Activated CD8-positive, alpha-beta T cell treated with anti-CD3 and anti-CD28 coated beads, Interleukin-2, amount 10 ng/mL, durations not matched to agents 7 days and 5 days (primary cell): ENCODE measurements at regions of chr2 and their contacts with region 1.

Region 1: DNA sequence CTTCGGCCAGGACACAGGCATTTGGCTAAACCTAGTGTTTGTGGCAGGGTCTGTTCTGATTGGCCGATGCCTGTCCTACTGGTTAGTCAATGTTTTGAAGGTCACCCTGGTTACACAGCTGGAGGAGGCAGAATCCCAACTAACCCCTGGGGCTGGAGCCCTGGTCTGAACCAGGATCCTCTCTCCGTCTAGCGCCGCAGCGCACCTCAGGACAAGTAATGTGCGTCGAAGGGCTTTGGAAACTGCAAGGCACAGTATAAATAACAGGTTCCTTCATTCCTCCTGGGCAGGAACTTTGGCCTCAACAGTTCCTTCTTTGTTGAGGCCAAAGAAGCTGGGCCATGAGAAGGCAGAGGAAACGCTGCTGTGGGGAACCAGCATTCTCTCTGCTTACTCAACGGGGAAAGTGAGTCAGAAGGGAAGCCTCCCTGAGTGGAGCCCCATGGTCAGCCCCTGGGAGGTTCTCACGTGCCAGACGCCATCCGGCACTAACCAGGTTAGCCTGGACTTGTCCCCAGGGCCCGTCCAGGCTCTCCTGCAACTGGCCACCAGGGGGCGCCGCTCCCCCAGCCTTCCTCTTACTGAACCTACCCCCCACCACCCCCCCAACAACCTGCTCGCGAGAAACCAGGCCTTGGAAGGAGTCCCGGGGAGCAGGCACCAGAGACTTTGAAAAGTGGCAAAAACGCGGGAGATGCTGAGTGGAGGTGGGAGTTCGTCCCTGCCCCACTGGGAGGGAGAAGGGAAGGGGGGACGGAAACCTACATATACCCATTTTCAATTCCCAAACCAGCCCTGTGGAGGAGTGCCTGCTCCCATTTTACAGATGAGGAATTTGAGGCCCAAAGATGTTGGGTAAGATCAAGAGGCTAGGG is 19.8 kb downstream of the TEX44 start:
- DNase-seq: peak; percentile 95
- ATAC-seq: peak; percentile 57
- H3K4me3 Mint-ChIP-seq: peak overlapping the region; percentile 79
- H3K27ac Mint-ChIP-seq: peak overlapping the region; percentile 92
- H3K4me1 Mint-ChIP-seq: peaks cover 48% of the 10 kb centered on the region
- H3K27me3 Mint-ChIP-seq: peaks cover 2% of the 10 kb centered on the region

Region 2: GRCh38 chr2:231632559-231633142 is 20.2 kb after region 1 on chr2:
- CTCF ChIA-PET with region 1: interaction called, 31 read pairs
- POLR2A ChIA-PET with region 1: interaction called, 21 read pairs
- DNase-seq: no peak
- ATAC-seq: no peak
- H3K4me3 Mint-ChIP-seq: no peak overlapping the region
- H3K27ac Mint-ChIP-seq: no peak overlapping the region
- H3K4me1 Mint-ChIP-seq: peaks cover 10% of the 10 kb centered on the region
- H3K27me3 Mint-ChIP-seq: no peaks in the 10 kb centered on the region

Region 3: GRCh38 chr2:231648587-231649174 is 36.3 kb after region 1 on chr2:
- CTCF ChIA-PET with region 1: interaction called, 25 read pairs
- POLR2A ChIA-PET with region 1: interaction called, 4 read pairs
- DNase-seq: peak; percentile 67
- ATAC-seq: peak; percentile 86
- H3K4me3 Mint-ChIP-seq: no peak overlapping the region
- H3K27ac Mint-ChIP-seq: no peak overlapping the region
- H3K4me1 Mint-ChIP-seq: peaks cover 5% of the 10 kb centered on the region
- H3K27me3 Mint-ChIP-seq: no peaks in the 10 kb centered on the region

Region 4: DNA sequence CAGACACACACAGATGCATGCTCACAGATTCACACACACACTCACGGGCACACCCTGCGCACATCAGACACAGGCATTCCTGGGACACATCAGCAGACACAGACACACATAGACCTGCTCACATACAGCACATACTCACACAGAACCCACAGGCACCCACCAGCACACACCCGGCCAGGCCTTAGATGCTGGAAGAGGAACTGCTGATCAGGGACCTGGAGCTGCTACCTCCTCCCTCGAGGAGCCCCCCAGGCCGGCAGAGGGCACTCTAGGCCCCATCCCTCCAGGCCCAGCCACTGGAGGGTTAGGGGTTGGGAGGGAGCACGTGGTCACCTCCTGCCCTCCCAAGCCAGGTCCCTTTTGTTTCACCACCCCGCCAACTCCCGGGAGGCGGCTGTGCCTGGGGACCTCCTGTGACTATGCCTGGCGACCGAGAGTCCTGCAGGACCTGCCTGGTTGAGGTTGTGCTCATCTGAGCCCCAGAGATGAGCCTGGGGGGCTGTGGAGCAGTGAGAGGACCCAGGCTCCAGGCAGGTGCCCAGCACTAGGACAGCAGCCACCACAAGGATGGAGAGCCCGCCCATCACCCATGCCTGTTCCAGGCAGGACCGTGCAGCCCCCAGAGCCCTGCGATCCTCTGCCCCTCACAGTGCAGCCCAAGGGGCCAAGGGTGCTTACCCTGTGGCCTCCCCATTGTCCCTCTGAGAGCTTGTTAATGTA is 74.9 kb after region 1 on chr2:
- CTCF ChIA-PET with region 1: interaction called, 16 read pairs
- POLR2A ChIA-PET with region 1: interaction called, 9 read pairs
- DNase-seq: peak; percentile 72
- ATAC-seq: peak; percentile 92
- H3K4me3 Mint-ChIP-seq: no peak overlapping the region
- H3K27ac Mint-ChIP-seq: no peak overlapping the region
- H3K4me1 Mint-ChIP-seq: peaks cover 15% of the 10 kb centered on the region
- H3K27me3 Mint-ChIP-seq: peaks cover 6% of the 10 kb centered on the region